ENCODE measurements at regions of chr6 and their contacts with region 1.

Region 1: GRCh38 chr6:52910091-52910490 is 593 bp upstream of the GSTA3 start:
- DNase-seq: no peak
- H3K4me3 Mint-ChIP-seq: no peak overlapping the region
- H3K27ac Mint-ChIP-seq: no peak overlapping the region
- H3K4me1 Mint-ChIP-seq: no peaks in the 10 kb centered on the region
- H3K27me3 Mint-ChIP-seq: peaks cover 28% of the 10 kb centered on the region
- CTCF ChIP-seq: no peak

Region 2: GRCh38 chr6:52846002-52846401 is 64.1 kb before region 1 on chr6:
- CTCF ChIA-PET with region 1: no interaction called
- intact Hi-C with region 1: no loop called
- DNase-seq: no peak
- H3K4me3 Mint-ChIP-seq: no peak overlapping the region
- H3K27ac Mint-ChIP-seq: no peak overlapping the region
- H3K4me1 Mint-ChIP-seq: no peaks in the 10 kb centered on the region
- H3K27me3 Mint-ChIP-seq: peaks cover 64% of the 10 kb centered on the region
- CTCF ChIP-seq: no peak

Region 3: GRCh38 chr6:53432318-53433161 is 522.4 kb after region 1 on chr6:
- CTCF ChIA-PET with region 1: interaction called, 13 read pairs
- intact Hi-C with region 1: no loop called
- DNase-seq: no peak
- H3K4me3 Mint-ChIP-seq: no peak overlapping the region
- H3K27ac Mint-ChIP-seq: no peak overlapping the region
- H3K4me1 Mint-ChIP-seq: peaks cover 2% of the 10 kb centered on the region
- H3K27me3 Mint-ChIP-seq: no peaks in the 10 kb centered on the region
- CTCF ChIP-seq: no peak

Region 4: GRCh38 chr6:53437557-53438202 is 527.6 kb after region 1 on chr6:
- CTCF ChIA-PET with region 1: interaction called, 13 read pairs
- intact Hi-C with region 1: no loop called
- DNase-seq: peak; percentile 50
- H3K4me3 Mint-ChIP-seq: no peak overlapping the region
- H3K27ac Mint-ChIP-seq: no peak overlapping the region
- H3K4me1 Mint-ChIP-seq: peaks cover 8% of the 10 kb centered on the region
- H3K27me3 Mint-ChIP-seq: no peaks in the 10 kb centered on the region
- CTCF ChIP-seq: peak; percentile 52